Mammary epithelial cell (primary cell): ENCODE measurements at regions of chr5 and their contacts with region 1.

Region 1: GRCh38 chr5:6745706-6746222 is 32.5 kb downstream of the TENT4A start:
- DNase-seq: peak; percentile 44
- H3K4me3 ChIP-seq: no peak overlapping the region
- H3K27ac ChIP-seq: no peak overlapping the region
- H3K4me1 ChIP-seq: no peaks in the 10 kb centered on the region
- H3K27me3 ChIP-seq: no peaks in the 10 kb centered on the region
- CTCF ChIP-seq: peak; percentile 77 to 79

Region 2: DNA sequence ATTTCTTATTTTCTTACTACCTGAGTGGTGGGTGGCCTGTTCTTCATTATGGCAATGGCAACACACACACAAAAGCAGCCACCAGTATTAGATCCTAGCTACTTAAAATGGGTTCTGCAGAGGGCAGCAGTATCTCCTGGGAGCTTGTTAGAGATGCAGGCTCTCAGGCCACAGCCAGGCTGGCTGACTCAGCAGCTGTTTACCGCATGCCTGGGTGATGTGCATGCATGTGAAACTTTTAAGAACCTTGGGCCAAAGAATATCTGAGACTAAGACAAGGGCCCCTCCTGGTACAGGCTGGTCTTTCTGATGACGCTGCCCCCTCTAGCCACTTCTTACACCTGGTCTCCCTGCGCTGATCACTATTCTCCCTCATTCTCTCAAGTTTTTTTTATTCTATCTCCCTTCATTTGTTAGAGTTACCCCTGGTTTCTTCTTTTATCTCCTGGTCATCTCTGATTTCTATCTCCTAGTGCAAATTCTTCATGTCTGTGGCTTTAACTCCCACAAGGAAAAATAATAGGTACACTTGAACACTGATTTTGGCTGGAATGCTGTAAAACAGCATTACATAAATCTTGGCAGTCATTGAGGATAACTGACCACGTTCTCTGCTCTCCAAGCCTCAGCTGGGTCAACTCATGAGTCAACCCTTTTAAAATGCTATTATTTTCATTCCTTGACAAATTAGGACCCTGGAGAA is 766.2 kb before region 1 on chr5:
- CTCF ChIA-PET with region 1: no interaction called
- dilution Hi-C with region 1: no loop called
- in situ Hi-C with region 1: no loop called
- intact Hi-C with region 1: no loop called
- DNase-seq: no peak
- H3K4me3 ChIP-seq: no peak overlapping the region
- H3K27ac ChIP-seq: no peak overlapping the region
- H3K4me1 ChIP-seq: no peaks in the 10 kb centered on the region
- H3K27me3 ChIP-seq: no peaks in the 10 kb centered on the region
- CTCF ChIP-seq: no peak

Region 3: GRCh38 chr5:6404129-6404528 is 341.6 kb before region 1 on chr5:
- CTCF ChIA-PET with region 1: no interaction called
- dilution Hi-C with region 1: no loop called
- in situ Hi-C with region 1: no loop called
- intact Hi-C with region 1: no loop called
- DNase-seq: peak; percentile 23
- H3K4me3 ChIP-seq: no peak overlapping the region
- H3K27ac ChIP-seq: no peak overlapping the region
- H3K4me1 ChIP-seq: peaks cover 19% of the 10 kb centered on the region
- H3K27me3 ChIP-seq: no peaks in the 10 kb centered on the region
- CTCF ChIP-seq: no peak

Region 4: GRCh38 chr5:6632917-6633468 is 112.8 kb before region 1 on chr5 and contains the starts of genes NSUN2 and SRD5A1:
- CTCF ChIA-PET with region 1: no interaction called
- dilution Hi-C with region 1: no loop called
- in situ Hi-C with region 1: no loop called
- intact Hi-C with region 1: loop called (anchors 1 kb)
- DNase-seq: peak; percentile 87
- H3K4me3 ChIP-seq: peak within 1 kb of the TSS; percentile 75 to 91 (median 87)
- H3K27ac ChIP-seq: peak within 1 kb of the TSS; percentile 95
- H3K4me1 ChIP-seq: peaks cover 45% of the 10 kb centered on the region
- H3K27me3 ChIP-seq: no peaks in the 10 kb centered on the region
- CTCF ChIP-seq: no peak
- total RNA-seq, gene NSUN2: 57.2 to 96.1 TPM
- total RNA-seq, gene SRD5A1: 21.8 to 31.8 TPM